ENCODE measurements at regions of chr2 and their contacts with region 1.

Region 1: GRCh38 chr2:55519938-55520885 is 694 bp downstream of the CFAP36 start:
- DNase-seq: peak in 1 of 2 experiments; percentile 37
- H3K4me3 ChIP-seq: peak overlapping the region; percentile 86
- H3K27ac ChIP-seq: peak overlapping the region; percentile 32
- H3K4me1 ChIP-seq: peaks cover 18% of the 10 kb centered on the region
- H3K27me3 ChIP-seq: no peaks in the 10 kb centered on the region
- CTCF ChIP-seq: no peak

Region 2: GRCh38 chr2:55311444-55311870 is 208.8 kb before region 1 on chr2:
- CTCF ChIA-PET with region 1: interaction called, 13 read pairs
- POLR2A ChIA-PET with region 1: no interaction called
- intact Hi-C with region 1: no loop called
- DNase-seq: peak in 1 of 2 experiments; percentile 50
- H3K4me3 ChIP-seq: no peak overlapping the region
- H3K27ac ChIP-seq: no peak overlapping the region
- H3K4me1 ChIP-seq: peaks cover 20% of the 10 kb centered on the region
- H3K27me3 ChIP-seq: no peaks in the 10 kb centered on the region
- CTCF ChIP-seq: peak; percentile 54

Region 3: GRCh38 chr2:55419679-55420438 is 100.4 kb before region 1 on chr2 and contains the start of gene CCDC88A:
- CTCF ChIA-PET with region 1: no interaction called
- POLR2A ChIA-PET with region 1: no interaction called
- intact Hi-C with region 1: loop called (anchors 2 kb)
- DNase-seq: peak; percentile 83 to 97
- H3K4me3 ChIP-seq: peak within 1 kb of the TSS; percentile 71
- H3K27ac ChIP-seq: no peak within 1 kb of the TSS
- H3K4me1 ChIP-seq: peaks cover 20% of the 10 kb centered on the region
- H3K27me3 ChIP-seq: no peaks in the 10 kb centered on the region
- CTCF ChIP-seq: peak; percentile 41; the same call in 1 of the 2 replicates
- total RNA-seq, gene CCDC88A: 12.0 and 12.3 TPM in 2 replicates

Region 4: GRCh38 chr2:55604027-55604565 is 83.9 kb after region 1 on chr2:
- CTCF ChIA-PET with region 1: no interaction called
- POLR2A ChIA-PET with region 1: no interaction called
- intact Hi-C with region 1: no loop called
- DNase-seq: no peak
- H3K4me3 ChIP-seq: no peak overlapping the region
- H3K27ac ChIP-seq: peak overlapping the region; percentile 3
- H3K4me1 ChIP-seq: no peaks in the 10 kb centered on the region
- H3K27me3 ChIP-seq: no peaks in the 10 kb centered on the region
- CTCF ChIP-seq: no peak

Measured in PC-9 (cell line).